Naive thymus-derived CD4-positive, alpha-beta T cell (primary cell): ENCODE measurements at regions of chr6 and their contacts with region 1.

Region 1: DNA sequence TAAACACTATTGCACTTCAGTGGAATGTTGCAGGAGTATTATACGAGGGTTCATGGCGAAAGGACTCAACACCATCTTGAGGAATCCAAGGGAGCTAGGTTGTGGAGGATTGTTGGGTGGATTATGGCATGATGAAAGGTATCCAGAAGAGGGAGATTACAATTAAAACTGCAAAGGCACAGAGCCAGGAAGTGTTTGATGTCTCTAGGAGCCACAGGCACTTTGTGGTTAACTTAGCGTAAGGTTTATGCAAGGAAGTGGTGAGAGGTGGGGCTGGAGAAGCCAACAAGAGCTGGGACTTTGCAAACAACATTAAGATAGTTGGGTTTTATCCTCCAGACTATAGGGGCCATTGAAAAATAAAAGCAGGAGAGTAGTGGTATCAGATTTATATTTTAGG is 86.6 kb upstream of the TPD52L1 start:
- DNase-seq: peak in 8 of 9 donors; percentile 13 to 77 (median 58)
- ATAC-seq: peak; percentile 89
- H3K4me3 ChIP-seq: no peak overlapping the region
- H3K4me3 Mint-ChIP-seq: no peak overlapping the region
- H3K27ac ChIP-seq: no peak overlapping the region
- H3K27ac Mint-ChIP-seq: no peak overlapping the region
- H3K4me1 ChIP-seq: peaks cover 0 to 36% of the 10 kb centered on the region in 2 donors
- H3K4me1 Mint-ChIP-seq: peaks cover 0 to 6% (median 0%) of the 10 kb centered on the region in 7 donors
- H3K27me3 ChIP-seq: no peaks in the 10 kb centered on the region
- H3K27me3 Mint-ChIP-seq: peaks cover 0 to 10% (median 0%) of the 10 kb centered on the region in 5 donors

Region 2: DNA sequence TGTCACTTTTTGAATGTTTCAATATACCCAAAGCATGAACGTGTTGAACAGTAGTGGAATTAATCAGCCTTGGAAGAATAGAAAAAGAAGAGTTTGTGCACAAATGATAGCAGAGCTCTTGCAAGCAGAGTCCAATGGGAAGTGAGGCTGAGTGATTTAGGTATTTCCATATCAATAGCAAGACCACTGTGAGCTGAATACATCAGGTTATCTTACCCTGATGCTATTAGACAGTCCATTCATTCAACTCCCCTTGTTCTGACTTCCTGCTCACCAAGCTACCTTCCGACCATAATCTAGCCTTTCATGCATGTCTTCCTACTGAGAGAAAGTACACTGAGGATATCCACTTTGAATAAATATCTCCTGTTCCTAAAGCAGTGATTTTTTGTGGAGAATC is 453.9 kb before region 1 on chr6:
- CTCF ChIA-PET with region 1: no interaction called
- POLR2A ChIA-PET with region 1: no interaction called
- intact Hi-C with region 1: no loop called
- DNase-seq: no peak
- ATAC-seq: no peak
- H3K4me3 ChIP-seq: no peak overlapping the region
- H3K4me3 Mint-ChIP-seq: no peak overlapping the region
- H3K27ac ChIP-seq: no peak overlapping the region
- H3K27ac Mint-ChIP-seq: no peak overlapping the region
- H3K4me1 ChIP-seq: no peaks in the 10 kb centered on the region
- H3K4me1 Mint-ChIP-seq: no peaks in the 10 kb centered on the region
- H3K27me3 ChIP-seq: no peaks in the 10 kb centered on the region
- H3K27me3 Mint-ChIP-seq: no peaks in the 10 kb centered on the region

Region 3: GRCh38 chr6:124961777-124962611 is 105.0 kb before region 1 on chr6 and contains the start of gene RNF217:
- CTCF ChIA-PET with region 1: no interaction called
- POLR2A ChIA-PET with region 1: no interaction called
- intact Hi-C with region 1: loop called in 1 of 2 experiments (anchors 5 kb)
- DNase-seq: peak in 5 of 9 donors; percentile 8 to 48 (median 16)
- ATAC-seq: peak; percentile 63
- H3K4me3 ChIP-seq: no peak within 1 kb of the TSS
- H3K4me3 Mint-ChIP-seq: peak within 1 kb of the TSS; percentile 72 to 89 (median 81)
- H3K27ac ChIP-seq: no peak within 1 kb of the TSS
- H3K27ac Mint-ChIP-seq: peak within 1 kb of the TSS in 3 of 9 donors; percentile 16 to 60 (median 45)
- H3K4me1 ChIP-seq: no peaks in the 10 kb centered on the region
- H3K4me1 Mint-ChIP-seq: peaks cover 15 to 31% (median 25%) of the 10 kb centered on the region in 7 donors
- H3K27me3 ChIP-seq: no peaks in the 10 kb centered on the region
- H3K27me3 Mint-ChIP-seq: peaks cover 54 to 79% (median 61%) of the 10 kb centered on the region in 5 donors
- total RNA-seq, gene RNF217: 0.89 to 3.6 (median 1.9) TPM